ENCODE measurements at regions of chr6 and their contacts with region 1.

Region 1: DNA sequence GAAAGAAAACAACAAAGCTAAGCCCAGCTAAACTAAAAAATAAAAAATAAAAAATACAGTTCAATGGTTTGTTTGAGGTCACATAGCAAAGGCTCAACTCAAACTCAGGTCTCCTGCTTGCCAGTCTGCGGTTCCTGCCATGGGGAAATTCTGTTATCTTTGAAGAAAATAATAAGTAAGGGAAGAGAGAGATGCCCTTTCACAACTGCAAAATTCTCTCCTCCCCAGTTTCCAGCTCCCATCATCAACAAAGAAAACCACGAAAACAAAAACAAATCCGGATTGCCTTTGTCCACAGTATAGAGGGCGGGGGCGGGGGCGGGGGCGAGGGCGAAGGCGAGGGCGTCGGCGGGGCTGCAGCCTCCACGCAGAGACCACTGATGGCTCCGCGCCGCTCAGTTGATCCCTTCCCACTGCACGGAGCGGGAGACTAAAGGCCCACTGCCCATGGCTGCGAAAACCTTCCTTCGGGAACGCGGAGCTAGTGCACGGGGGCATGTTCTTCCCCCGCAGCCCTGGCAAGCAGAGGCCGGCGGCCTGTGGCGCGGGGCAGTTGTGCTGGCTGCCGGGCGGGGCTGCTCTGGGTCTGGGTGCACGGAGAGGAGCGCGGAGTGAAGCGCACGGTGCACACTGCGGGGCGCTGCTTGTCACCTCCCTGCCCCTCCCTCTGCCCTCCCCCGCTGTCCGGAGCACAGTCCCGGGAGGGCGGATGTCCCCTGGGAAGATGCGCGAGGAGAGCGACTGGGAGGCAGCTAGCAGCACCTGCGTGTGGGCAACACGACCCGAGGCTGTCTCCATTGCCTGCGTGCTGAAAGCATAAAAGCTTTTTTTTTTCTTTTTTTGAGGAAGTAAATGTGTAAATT is 54.1 kb upstream of the TPD52L1 start:
- DNase-seq: no peak
- H3K4me3 ChIP-seq: peak overlapping the region; percentile 42
- CTCF ChIP-seq: no peak

Region 2: GRCh38 chr6:125025164-125025854 is 74.1 kb before region 1 on chr6:
- in situ Hi-C with region 1: loop called (anchors 5 kb)
- DNase-seq: no peak
- H3K4me3 ChIP-seq: no peak overlapping the region
- CTCF ChIP-seq: no peak

Measured in astrocyte of the cerebellum (primary cell).